ENCODE measurements at regions of chr15 and their contacts with region 1.

Region 1: DNA sequence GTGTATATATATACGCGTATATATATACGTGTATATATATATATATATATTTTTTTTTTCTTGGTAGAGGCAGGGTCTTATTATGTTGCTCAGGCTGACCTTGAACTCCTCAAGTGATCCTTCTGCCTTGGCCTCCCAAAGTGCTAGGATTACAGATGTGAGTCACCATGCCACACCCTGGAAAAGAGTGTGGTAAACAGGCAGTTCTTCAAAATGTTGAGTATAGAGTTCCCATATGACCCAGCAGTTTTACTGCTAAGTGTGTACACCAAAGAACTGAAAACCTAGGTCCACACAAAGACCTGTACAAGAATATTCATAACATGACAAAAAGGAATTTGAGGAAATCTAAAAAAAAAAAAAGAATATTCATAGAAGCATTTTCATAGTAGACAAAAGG is 71.8 kb upstream of the GCNT3 start:
- DNase-seq: no peak
- H3K4me3 ChIP-seq: no peak overlapping the region
- H3K27ac ChIP-seq: no peak overlapping the region
- H3K4me1 ChIP-seq: no peaks in the 10 kb centered on the region
- H3K27me3 ChIP-seq: no peaks in the 10 kb centered on the region
- CTCF ChIP-seq: no peak
- POLR2A ChIP-seq: no peak

Region 2: GRCh38 chr15:59587068-59587826 is 47.4 kb after region 1 on chr15:
- intact Hi-C with region 1: loop called (anchors 2 kb)
- DNase-seq: no peak
- H3K4me3 ChIP-seq: no peak overlapping the region
- H3K27ac ChIP-seq: peak overlapping the region; percentile 35 to 62
- H3K4me1 ChIP-seq: no peaks in the 10 kb centered on the region
- H3K27me3 ChIP-seq: no peaks in the 10 kb centered on the region
- CTCF ChIP-seq: no peak
- POLR2A ChIP-seq: no peak

Region 3: DNA sequence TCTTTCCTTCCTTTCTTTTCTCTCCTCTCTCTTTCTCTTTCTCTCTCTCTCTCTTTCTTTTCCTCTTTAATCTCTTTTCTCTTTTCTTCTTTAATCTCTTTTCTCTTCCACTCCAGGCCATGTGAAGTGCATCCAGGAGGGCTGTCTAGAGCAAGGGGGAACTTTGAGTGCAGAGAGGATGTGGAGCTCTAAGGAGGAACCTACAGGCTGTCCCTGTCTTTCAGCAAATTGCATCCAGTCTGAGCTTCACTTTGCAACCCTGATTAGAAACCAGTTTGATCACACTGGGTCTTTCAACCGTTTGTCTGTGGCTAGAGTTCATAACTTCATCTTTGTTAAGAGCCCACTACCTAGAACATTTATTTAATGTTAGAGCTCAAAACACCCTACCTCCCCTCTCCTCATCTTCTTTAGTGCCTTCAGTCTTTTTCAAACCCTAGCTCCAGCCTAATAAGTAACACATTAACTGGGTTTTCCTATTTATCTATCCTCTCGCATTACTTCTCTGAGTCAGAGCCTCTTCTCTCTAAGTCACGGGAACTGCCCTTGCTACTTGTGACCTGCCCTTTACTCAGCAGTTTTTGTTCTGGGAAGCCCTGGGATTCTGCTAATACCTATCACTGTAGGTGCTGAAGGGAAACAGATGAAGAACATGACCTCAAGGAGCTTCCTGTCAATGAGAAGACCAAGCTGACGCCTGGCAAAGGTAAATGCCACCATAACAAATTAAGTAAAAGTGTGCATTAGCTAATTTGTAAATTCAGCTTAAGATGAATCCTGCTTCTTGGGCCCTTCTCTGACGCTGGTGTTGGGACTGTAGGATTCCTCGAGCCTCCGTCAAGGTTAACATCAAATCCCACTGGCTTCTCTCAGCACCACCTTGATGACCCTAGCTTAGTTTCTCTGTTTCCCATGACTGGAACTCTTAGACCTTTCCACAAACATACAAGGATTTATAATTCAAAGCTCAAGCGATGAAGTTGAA is 71.8 kb after region 1 on chr15 and contains the start of gene GCNT3:
- intact Hi-C with region 1: no loop called
- DNase-seq: no peak
- H3K4me3 ChIP-seq: no peak within 1 kb of the TSS
- H3K27ac ChIP-seq: no peak within 1 kb of the TSS
- H3K4me1 ChIP-seq: no peaks in the 10 kb centered on the region
- H3K27me3 ChIP-seq: no peaks in the 10 kb centered on the region
- CTCF ChIP-seq: no peak
- POLR2A ChIP-seq: no peak
- total RNA-seq, gene GCNT3: 5.2 TPM in 1 of 3 donors, not detected in the others